ENCODE measurements at regions of chr6 and their contacts with region 1.

Region 1: GRCh38 chr6:133923938-133924593 is 29.0 kb upstream of the TBPL1 start:
- DNase-seq: peak; percentile 71 to 78
- H3K4me3 ChIP-seq: no peak overlapping the region
- H3K4me1 ChIP-seq: no peaks in the 10 kb centered on the region
- H3K27me3 ChIP-seq: peaks cover 29% of the 10 kb centered on the region

Region 2: DNA sequence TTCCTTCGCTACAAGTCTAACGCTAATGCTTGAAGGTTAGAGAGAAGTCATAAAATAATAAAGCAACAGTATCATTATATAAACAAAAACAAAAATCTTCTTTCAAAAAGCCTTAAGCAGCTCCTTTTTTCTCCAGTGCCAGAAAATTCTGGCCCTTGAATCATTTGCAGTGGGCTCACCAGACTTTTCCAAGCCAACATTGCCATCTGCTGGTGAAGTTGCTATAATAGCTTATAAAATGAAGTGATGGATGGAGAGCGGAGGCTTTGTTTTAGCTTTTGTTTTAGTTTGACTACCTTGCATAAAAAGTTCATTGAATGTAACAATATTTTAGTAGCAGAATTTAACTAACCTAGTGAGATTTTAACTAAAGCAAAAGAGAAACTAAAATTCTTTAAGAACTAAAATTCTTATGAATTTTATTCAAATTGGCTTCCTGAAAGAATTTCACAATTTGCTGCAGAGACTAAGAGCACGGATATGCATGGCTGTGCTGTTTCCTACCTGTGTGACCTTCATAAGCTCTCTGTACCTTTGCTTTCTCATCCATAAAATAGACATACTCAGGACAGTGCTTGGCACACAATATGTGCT is 173.1 kb after region 1 on chr6:
- in situ Hi-C with region 1: loop called (anchors 5 kb)
- DNase-seq: peak; percentile 56 to 82
- H3K4me3 ChIP-seq: no peak overlapping the region
- H3K4me1 ChIP-seq: no peaks in the 10 kb centered on the region; the same call in 1 of the 2 replicates
- H3K27me3 ChIP-seq: no peaks in the 10 kb centered on the region

Measured in HAP-1 (cell line).